CD8-positive, alpha-beta T cell (primary cell): ENCODE measurements at regions of chr16 and their contacts with region 1.

Region 1: DNA sequence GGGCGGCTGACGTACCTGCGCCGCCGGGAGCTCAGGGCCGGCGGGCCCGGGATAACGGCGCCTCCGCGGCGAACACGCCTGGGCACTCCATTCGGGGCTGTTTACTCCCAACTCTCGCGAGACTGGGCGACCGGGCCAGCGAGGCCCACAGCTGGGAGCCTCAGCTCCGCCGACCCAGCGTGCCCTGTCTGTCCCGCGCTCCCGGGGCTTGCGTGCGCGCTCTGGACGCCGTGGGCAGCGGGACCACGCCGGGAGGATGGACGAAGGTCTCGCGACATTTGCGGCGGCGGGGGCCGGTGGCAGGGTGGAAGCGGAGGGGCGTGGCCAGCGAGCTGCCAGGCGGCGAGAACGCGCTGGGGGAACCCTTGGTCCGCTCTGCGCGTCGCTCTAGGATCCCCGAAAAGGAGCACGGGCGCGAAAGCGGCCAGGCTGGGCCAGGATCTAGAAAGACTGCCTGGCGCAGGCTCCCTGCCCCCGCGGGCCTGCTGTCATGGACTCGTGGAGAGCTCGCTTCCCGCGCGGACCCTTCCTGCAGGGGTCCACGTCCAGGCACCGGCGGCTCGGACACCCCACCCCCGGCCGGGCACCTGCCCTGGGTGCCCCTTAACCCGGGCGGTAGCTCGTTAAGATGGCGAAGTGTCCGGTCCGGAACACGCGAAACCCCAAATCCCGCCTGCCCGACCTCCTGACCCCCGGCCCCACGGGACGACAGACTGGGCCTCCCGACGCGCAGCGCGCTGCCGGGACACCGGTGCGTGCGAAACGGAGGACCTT is at the start of gene MBTPS1:
- DNase-seq: peak; percentile 96 to 99 (median 98)
- ATAC-seq: peak; percentile 83
- H3K4me3 ChIP-seq: peak within 1 kb of the TSS; percentile 86 to 95
- H3K4me3 Mint-ChIP-seq: peak within 1 kb of the TSS; percentile 90
- H3K27ac ChIP-seq: peak within 1 kb of the TSS; percentile 82 to 91
- H3K27ac Mint-ChIP-seq: peak within 1 kb of the TSS; percentile 94
- H3K4me1 ChIP-seq: peaks cover 19% of the 10 kb centered on the region
- H3K4me1 Mint-ChIP-seq: peaks cover 30% of the 10 kb centered on the region
- H3K27me3 ChIP-seq: no peaks in the 10 kb centered on the region
- H3K27me3 Mint-ChIP-seq: no peaks in the 10 kb centered on the region
- CTCF ChIP-seq: peak; percentile 5
- total RNA-seq, gene MBTPS1: 128 to 130 TPM

Region 2: GRCh38 chr16:84084570-84085270 is 32.2 kb before region 1 on chr16:
- CTCF ChIA-PET with region 1: interaction called, 18 read pairs
- POLR2A ChIA-PET with region 1: interaction called, 7 read pairs
- intact Hi-C with region 1: loop called in 1 of 2 experiments (anchors 2 kb)
- DNase-seq: peak; percentile 44 to 84 (median 71)
- ATAC-seq: peak; percentile 88
- H3K4me3 ChIP-seq: no peak overlapping the region
- H3K4me3 Mint-ChIP-seq: no peak overlapping the region
- H3K27ac ChIP-seq: no peak overlapping the region
- H3K27ac Mint-ChIP-seq: no peak overlapping the region
- H3K4me1 ChIP-seq: peaks cover 20% of the 10 kb centered on the region
- H3K4me1 Mint-ChIP-seq: peaks cover 32% of the 10 kb centered on the region
- H3K27me3 ChIP-seq: no peaks in the 10 kb centered on the region
- H3K27me3 Mint-ChIP-seq: no peaks in the 10 kb centered on the region
- CTCF ChIP-seq: peak; percentile 73

Region 3: DNA sequence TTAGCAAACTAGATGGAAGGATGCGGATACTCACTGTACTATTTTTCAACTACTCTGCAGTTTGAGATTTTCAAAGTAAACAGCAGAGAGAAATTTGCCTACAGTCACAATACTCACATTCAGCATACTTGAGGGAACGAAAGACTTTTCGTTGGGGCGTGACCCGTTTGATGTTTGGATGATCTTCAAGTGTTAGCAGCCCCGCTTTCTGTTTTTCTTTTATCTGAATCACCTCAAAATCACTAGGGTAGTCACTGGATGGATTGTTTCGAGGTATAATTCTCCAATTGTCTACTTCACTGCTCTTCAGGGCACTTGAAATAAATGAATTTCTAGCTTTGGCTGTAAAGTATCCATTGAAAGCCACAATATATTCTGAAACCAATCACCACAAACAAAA is 18.0 kb before region 1 on chr16:
- CTCF ChIA-PET with region 1: interaction called, 3 read pairs
- POLR2A ChIA-PET with region 1: interaction called, 8 read pairs
- intact Hi-C with region 1: loop called in 1 of 2 experiments (anchors 2 kb)
- DNase-seq: no peak
- ATAC-seq: no peak
- H3K4me3 ChIP-seq: no peak overlapping the region
- H3K4me3 Mint-ChIP-seq: no peak overlapping the region
- H3K27ac ChIP-seq: no peak overlapping the region
- H3K27ac Mint-ChIP-seq: no peak overlapping the region
- H3K4me1 ChIP-seq: no peaks in the 10 kb centered on the region
- H3K4me1 Mint-ChIP-seq: peaks cover 29% of the 10 kb centered on the region
- H3K27me3 ChIP-seq: no peaks in the 10 kb centered on the region
- H3K27me3 Mint-ChIP-seq: no peaks in the 10 kb centered on the region
- CTCF ChIP-seq: no peak

Region 4: DNA sequence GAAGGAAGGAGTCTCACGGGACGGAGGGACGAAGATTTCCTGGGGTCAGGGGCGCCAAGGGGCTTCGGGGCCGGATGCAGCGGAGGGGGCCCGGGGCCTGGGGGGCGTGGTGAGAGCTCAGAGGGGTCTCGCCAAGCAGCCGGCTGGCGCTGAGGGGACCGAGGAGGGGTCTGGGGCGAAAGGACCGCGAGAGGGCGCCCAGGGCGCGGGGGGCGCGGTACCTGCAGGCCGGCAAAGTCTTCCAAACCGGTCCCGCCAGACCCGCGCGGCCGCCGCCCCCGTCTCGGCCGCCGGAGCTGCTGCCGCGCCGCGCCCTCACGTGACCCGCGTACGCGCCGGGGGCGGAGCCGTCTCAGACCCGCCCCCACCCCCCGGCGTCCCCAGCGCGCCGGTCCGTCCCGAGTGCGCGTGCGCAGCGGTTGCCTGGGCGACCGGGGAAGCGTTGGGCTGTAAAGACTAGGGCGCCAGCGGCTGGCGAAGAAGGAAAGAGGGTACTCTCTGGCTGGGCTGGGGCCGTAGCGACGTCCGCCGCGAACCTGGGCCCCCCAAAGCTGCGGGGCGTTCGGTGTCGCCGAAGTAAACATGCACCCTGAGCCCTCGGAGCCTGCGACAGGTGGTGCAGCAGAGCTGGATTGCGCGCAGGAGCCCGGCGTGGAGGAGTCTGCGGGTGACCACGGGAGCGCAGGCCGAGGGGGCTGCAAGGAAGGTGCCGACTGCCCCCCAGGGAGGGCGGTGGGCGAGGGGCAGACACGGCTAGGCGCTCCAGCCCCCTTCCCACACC is 28.1 kb after region 1 on chr16 and contains the starts of genes DNAAF1 and HSDL1:
- CTCF ChIA-PET with region 1: interaction called, 8 read pairs
- POLR2A ChIA-PET with region 1: interaction called, 42 read pairs
- intact Hi-C with region 1: loop called (anchors 1 kb)
- DNase-seq: peak; percentile 91 to 98 (median 96)
- ATAC-seq: peak; percentile 81
- H3K4me3 ChIP-seq: peak within 1 kb of the TSS; percentile 70 to 90
- H3K4me3 Mint-ChIP-seq: peak within 1 kb of the TSS; percentile 93
- H3K27ac ChIP-seq: peak within 1 kb of the TSS; percentile 54 to 65
- H3K27ac Mint-ChIP-seq: peak within 1 kb of the TSS; percentile 88
- H3K4me1 ChIP-seq: peaks cover 11% of the 10 kb centered on the region
- H3K4me1 Mint-ChIP-seq: peaks cover 25% of the 10 kb centered on the region
- H3K27me3 ChIP-seq: no peaks in the 10 kb centered on the region
- H3K27me3 Mint-ChIP-seq: peaks cover 2% of the 10 kb centered on the region
- CTCF ChIP-seq: no peak
- total RNA-seq, gene DNAAF1: not detected
- total RNA-seq, gene HSDL1: 8.7 to 9.9 TPM

Region 5: DNA sequence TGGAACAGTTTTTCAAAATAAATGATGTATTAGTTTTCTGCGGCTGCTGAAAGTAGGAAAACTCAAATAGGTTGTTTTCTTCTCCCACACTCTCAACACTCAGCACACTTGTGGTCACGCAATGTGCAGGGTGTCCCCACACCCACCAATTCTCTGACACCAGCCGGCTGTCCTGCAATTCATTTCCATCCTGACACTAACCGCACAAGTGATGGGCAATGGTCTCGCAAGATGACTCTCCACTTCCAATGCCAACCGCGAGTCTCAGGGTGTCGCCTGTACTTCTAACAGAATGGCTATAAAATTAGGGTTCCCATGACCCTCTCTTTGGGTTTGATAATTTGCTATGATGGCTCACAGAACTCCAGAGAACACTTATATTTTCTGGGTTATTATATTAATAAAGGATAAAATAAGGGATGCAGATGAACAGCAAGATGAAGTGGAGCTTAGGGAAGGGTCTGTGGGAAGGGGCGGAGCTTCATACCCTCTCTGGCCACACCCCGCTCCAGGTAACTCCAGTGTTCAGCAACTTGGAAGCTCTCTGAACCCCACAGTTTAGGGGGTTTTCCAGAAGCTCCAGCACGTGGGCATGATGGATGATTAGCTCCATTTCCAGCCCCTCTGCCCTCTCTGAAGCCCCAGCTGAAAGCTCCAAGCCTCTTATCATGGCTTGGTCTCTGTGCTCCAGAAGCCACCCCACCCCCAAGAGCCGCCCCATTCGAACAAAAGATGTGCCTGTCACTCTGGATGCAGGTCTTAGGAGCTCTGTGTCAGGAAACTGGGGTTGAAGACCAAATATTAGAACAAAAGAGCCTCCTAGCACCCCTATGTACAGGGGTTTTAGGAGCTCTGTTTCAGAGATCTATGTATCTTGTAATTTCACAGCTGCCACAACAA is 50.1 kb after region 1 on chr16:
- CTCF ChIA-PET with region 1: no interaction called
- POLR2A ChIA-PET with region 1: no interaction called
- intact Hi-C with region 1: no loop called
- DNase-seq: no peak
- ATAC-seq: no peak
- H3K4me3 ChIP-seq: no peak overlapping the region
- H3K4me3 Mint-ChIP-seq: no peak overlapping the region
- H3K27ac ChIP-seq: no peak overlapping the region
- H3K27ac Mint-ChIP-seq: no peak overlapping the region
- H3K4me1 ChIP-seq: no peaks in the 10 kb centered on the region
- H3K4me1 Mint-ChIP-seq: no peaks in the 10 kb centered on the region
- H3K27me3 ChIP-seq: peaks cover 0 to 3% of the 10 kb centered on the region in 2 experiments
- H3K27me3 Mint-ChIP-seq: peaks cover 14% of the 10 kb centered on the region
- CTCF ChIP-seq: no peak

Region 6: GRCh38 chr16:85010931-85011845 is 894.3 kb after region 1 on chr16 and contains the start of gene ZDHHC7:
- CTCF ChIA-PET with region 1: no interaction called
- POLR2A ChIA-PET with region 1: no interaction called
- intact Hi-C with region 1: loop called in 1 of 2 experiments (anchors 2 kb)
- DNase-seq: peak; percentile 75 to 94 (median 88)
- ATAC-seq: peak; percentile 88
- H3K4me3 ChIP-seq: peak within 1 kb of the TSS; percentile 69 to 99
- H3K4me3 Mint-ChIP-seq: peak within 1 kb of the TSS; percentile 99
- H3K27ac ChIP-seq: peak within 1 kb of the TSS; percentile 94 to 100
- H3K27ac Mint-ChIP-seq: peak within 1 kb of the TSS; percentile 99
- H3K4me1 ChIP-seq: peaks cover 32% of the 10 kb centered on the region
- H3K4me1 Mint-ChIP-seq: peaks cover 48% of the 10 kb centered on the region
- H3K27me3 ChIP-seq: no peaks in the 10 kb centered on the region
- H3K27me3 Mint-ChIP-seq: peaks cover 2% of the 10 kb centered on the region
- CTCF ChIP-seq: no peak
- total RNA-seq, gene ZDHHC7: 85.4 to 92.1 TPM